ENCODE measurements at regions of chr12 and their contacts with region 1.

Region 1: DNA sequence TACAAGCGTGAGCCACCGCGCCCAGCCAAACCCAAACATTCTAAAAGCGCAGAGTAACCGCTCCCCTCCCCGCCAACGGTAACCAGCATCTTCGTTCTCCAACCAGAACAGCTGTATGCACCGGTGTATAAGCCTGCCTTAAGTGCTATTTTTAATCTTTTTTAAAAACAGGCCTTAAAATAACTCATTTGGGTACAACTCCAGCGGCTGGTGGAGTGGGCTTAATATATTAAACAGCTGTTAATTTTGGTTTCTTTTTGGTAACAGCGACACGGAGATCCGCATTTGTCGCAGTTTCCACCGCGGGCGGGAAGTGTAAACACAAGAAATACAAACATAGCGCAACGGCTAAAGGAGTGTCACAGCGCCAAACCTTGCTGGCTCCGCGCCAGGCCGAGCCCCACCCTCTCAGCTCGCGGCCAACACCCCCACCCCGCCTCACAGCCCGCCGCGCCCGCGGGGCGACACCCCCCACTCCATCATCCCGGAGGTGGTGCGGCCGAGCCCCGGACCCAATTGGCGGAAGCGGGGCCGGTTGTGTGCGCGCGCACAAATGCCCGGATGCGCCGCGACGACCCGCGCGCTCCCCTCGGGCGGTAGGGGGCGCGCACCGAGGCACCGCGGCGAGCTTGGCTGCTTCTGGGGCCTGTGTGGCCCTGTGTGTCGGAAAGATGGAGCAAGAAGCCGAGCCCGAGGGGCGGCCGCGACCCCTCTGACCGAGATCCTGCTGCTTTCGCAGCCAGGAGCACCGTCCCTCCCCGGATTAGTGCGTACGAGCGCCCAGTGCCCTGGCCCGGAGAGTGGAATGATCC is at the start of gene MDM2:
- DNase-seq: peak; percentile 99
- ATAC-seq: peak; percentile 88 to 97 (median 93)
- H3K4me3 ChIP-seq: peak within 1 kb of the TSS; percentile 94
- H3K4me3 Mint-ChIP-seq: peak within 1 kb of the TSS; percentile 91
- H3K27ac ChIP-seq: peak within 1 kb of the TSS; percentile 98
- H3K27ac Mint-ChIP-seq: peak within 1 kb of the TSS; percentile 96 to 97
- H3K4me1 ChIP-seq: peaks cover 18% of the 10 kb centered on the region
- H3K4me1 Mint-ChIP-seq: peaks cover 13 to 19% of the 10 kb centered on the region in 2 donors
- H3K27me3 ChIP-seq: no peaks in the 10 kb centered on the region
- H3K27me3 Mint-ChIP-seq: no peaks in the 10 kb centered on the region
- CTCF ChIP-seq: peak; percentile 75
- total RNA-seq, gene MDM2: 130 to 143 (median 132) TPM

Region 2: GRCh38 chr12:68163560-68164081 is 644.2 kb before region 1 on chr12:
- intact Hi-C with region 1: loop called (anchors 5 kb)
- DNase-seq: peak in 1 of 2 donors; percentile 50
- ATAC-seq: peak; percentile 34 to 59 (median 55)
- H3K4me3 ChIP-seq: no peak overlapping the region
- H3K4me3 Mint-ChIP-seq: peak overlapping the region; percentile 29
- H3K27ac ChIP-seq: peak overlapping the region; percentile 2
- H3K27ac Mint-ChIP-seq: peak overlapping the region; percentile 27 to 76
- H3K4me1 ChIP-seq: peaks cover 13% of the 10 kb centered on the region
- H3K4me1 Mint-ChIP-seq: peaks cover 35 to 43% of the 10 kb centered on the region in 2 donors
- H3K27me3 ChIP-seq: no peaks in the 10 kb centered on the region
- H3K27me3 Mint-ChIP-seq: no peaks in the 10 kb centered on the region
- CTCF ChIP-seq: no peak